Mammary epithelial cell (primary cell): ENCODE measurements at regions of chrX and their contacts with region 1.

Region 1: GRCh38 chrX:151974336-151975227 is at the start of gene GABRE:
- DNase-seq: no peak
- H3K4me3 ChIP-seq: peak within 1 kb of the TSS; percentile 44 to 62 (median 50)
- H3K27ac ChIP-seq: peak within 1 kb of the TSS; percentile 14
- H3K4me1 ChIP-seq: peaks cover 18% of the 10 kb centered on the region
- H3K27me3 ChIP-seq: no peaks in the 10 kb centered on the region
- CTCF ChIP-seq: no peak
- total RNA-seq, gene GABRE: 26.5 to 32.2 TPM

Region 2: DNA sequence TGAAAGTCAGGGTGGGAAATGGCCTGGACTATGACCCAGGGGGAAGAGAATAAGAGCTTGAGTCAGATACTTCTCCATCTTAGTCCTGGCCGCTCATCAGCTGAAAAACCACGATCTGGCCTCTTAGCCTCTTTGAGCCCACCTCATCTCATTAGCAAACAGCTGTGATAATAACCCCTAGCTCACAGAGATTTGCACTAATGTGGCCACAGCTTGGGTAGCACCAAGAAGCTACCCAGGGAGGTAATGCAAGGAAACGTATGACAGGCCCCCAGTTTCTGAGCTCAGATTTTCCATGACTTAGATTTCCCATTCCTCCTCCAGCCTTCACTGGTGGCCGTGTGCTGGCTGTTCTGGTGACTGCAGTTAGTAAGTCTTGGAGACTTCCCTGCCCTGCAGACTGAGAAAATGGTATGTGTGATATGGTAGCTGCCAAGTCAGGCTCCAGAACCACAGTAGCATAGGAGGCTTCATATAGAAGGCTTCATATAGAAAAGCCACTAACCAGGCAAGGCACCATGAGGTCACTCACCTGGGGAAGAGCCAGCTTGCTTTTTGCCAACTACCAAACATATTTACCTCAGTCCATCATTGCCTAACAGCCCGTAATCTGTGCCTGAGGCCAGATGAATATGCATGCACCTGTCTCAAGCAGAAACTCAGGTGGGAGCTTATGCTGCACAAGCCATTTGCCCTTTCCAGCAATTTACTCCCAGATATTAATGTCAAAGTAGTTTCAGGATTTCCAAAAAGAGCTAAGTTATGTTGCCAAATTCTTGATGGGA is 51.3 kb after region 1 on chrX:
- CTCF ChIA-PET with region 1: no interaction called
- dilution Hi-C with region 1: no loop called
- in situ Hi-C with region 1: no loop called
- intact Hi-C with region 1: no loop called
- DNase-seq: peak; percentile 2
- H3K4me3 ChIP-seq: no peak overlapping the region
- H3K27ac ChIP-seq: no peak overlapping the region
- H3K4me1 ChIP-seq: no peaks in the 10 kb centered on the region
- H3K27me3 ChIP-seq: no peaks in the 10 kb centered on the region
- CTCF ChIP-seq: no peak

Region 3: GRCh38 chrX:152197465-152197864 is 222.9 kb after region 1 on chrX:
- CTCF ChIA-PET with region 1: no interaction called
- dilution Hi-C with region 1: no loop called
- in situ Hi-C with region 1: no loop called
- intact Hi-C with region 1: loop called (anchors 10 kb)
- DNase-seq: no peak
- H3K4me3 ChIP-seq: no peak overlapping the region
- H3K27ac ChIP-seq: no peak overlapping the region
- H3K4me1 ChIP-seq: no peaks in the 10 kb centered on the region
- H3K27me3 ChIP-seq: no peaks in the 10 kb centered on the region
- CTCF ChIP-seq: no peak